Colonic mucosa (tissue), 4 donors: ENCODE measurements at regions of chr13 and their contacts with region 1.

Region 1: DNA sequence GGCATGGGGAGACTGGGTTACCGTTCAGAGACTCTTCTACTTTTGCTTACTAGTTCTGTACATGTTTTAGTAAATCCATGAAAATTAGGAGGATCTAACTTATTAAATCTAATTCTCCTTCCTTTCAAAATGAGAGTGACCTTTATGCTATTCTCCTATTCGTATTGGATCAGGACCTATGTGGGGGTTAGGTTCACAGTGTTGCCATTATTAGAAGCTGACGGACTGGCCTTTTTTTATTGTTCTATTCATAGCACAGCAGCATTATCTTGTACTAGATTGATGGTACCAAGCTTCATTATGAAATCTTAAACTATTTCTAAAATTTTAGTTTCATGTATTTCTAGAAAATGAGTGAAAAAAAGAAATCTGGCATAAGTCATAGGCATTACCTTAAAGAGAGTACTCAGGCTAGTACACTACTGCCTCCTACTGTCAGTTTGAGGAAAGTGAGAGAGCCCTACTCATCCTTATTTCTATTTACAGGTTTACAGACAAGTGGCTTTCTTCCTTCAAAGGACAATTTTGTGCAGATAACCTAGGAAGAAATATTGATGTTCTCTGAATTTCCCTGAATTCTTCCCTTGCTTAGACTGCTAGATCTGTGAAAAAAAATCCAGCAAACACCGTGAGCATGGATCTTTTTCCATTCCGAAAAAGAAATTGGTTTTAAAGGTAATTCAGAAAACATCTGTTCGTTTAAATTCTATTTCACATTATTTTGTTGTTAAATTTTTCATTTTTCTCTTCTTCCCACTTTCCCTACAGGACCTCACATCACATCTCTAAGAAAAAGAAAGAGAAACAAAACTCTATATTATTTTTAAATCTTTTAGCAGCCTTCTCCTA is 485.5 kb downstream of the DIAPH3 start:
- DNase-seq: no peak
- H3K4me3 ChIP-seq: no peak overlapping the region
- H3K27ac ChIP-seq: no peak overlapping the region
- H3K4me1 ChIP-seq: no peaks in the 10 kb centered on the region
- H3K27me3 ChIP-seq: no peaks in the 10 kb centered on the region
- CTCF ChIP-seq: peak; percentile 76

Region 2: GRCh38 chr13:59201841-59202240 is 476.3 kb before region 1 on chr13:
- intact Hi-C with region 1: no loop called
- DNase-seq: no peak
- H3K4me3 ChIP-seq: no peak overlapping the region
- H3K27ac ChIP-seq: no peak overlapping the region
- H3K4me1 ChIP-seq: no peaks in the 10 kb centered on the region
- H3K27me3 ChIP-seq: no peaks in the 10 kb centered on the region
- CTCF ChIP-seq: no peak

Region 3: DNA sequence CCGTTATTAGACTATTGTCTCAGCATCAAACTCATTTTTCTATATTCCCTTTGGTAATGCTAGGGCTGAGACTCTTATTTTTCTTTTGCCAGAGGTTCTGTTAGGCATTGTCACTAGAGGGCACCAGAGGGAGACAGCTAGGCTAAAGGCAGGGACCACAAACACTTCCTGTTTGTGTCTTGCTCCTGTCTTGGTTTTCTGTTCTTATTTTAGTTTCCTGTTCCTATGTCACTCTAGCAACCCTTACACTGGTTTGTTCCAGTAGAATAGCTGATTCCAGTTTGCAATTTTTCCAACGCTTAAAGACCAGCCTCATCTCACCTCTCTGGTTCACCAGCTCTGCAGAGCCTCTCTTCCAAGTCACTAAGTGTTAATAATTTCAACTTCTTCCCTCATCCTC is 286.5 kb before region 1 on chr13:
- intact Hi-C with region 1: loop called (anchors 5 kb)
- DNase-seq: peak; percentile 67
- H3K4me3 ChIP-seq: no peak overlapping the region
- H3K27ac ChIP-seq: no peak overlapping the region
- H3K4me1 ChIP-seq: no peaks in the 10 kb centered on the region
- H3K27me3 ChIP-seq: no peaks in the 10 kb centered on the region
- CTCF ChIP-seq: peak; percentile 72

Region 4: DNA sequence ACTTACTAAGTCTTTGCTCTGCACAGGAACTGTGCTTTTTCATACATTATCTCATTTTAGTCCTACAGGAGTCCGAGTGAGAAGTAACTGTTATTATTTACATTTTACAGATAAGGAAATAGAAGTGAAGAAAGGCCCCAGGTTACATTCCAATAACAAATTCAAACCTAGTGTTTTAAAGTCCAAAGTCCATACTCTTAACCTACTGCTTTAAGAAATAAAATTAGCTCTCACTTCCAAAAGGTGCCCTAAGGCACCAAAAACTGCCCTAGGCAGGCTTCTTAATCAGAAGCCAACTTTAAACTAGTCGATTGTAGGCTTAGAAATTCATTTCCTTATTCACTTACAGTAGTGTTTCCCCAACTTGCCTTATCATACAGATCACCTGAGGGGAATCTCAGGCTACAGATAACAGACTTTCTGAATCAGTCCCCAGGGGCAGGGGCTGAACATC is 70.4 kb before region 1 on chr13:
- intact Hi-C with region 1: no loop called
- DNase-seq: no peak
- H3K4me3 ChIP-seq: no peak overlapping the region
- H3K27ac ChIP-seq: no peak overlapping the region
- H3K4me1 ChIP-seq: no peaks in the 10 kb centered on the region
- H3K27me3 ChIP-seq: no peaks in the 10 kb centered on the region
- CTCF ChIP-seq: no peak

Region 5: GRCh38 chr13:59801107-59801880 is 123.1 kb after region 1 on chr13:
- intact Hi-C with region 1: no loop called
- DNase-seq: no peak
- H3K4me3 ChIP-seq: no peak overlapping the region
- H3K27ac ChIP-seq: no peak overlapping the region
- H3K4me1 ChIP-seq: no peaks in the 10 kb centered on the region
- H3K27me3 ChIP-seq: no peaks in the 10 kb centered on the region
- CTCF ChIP-seq: no peak

Region 6: DNA sequence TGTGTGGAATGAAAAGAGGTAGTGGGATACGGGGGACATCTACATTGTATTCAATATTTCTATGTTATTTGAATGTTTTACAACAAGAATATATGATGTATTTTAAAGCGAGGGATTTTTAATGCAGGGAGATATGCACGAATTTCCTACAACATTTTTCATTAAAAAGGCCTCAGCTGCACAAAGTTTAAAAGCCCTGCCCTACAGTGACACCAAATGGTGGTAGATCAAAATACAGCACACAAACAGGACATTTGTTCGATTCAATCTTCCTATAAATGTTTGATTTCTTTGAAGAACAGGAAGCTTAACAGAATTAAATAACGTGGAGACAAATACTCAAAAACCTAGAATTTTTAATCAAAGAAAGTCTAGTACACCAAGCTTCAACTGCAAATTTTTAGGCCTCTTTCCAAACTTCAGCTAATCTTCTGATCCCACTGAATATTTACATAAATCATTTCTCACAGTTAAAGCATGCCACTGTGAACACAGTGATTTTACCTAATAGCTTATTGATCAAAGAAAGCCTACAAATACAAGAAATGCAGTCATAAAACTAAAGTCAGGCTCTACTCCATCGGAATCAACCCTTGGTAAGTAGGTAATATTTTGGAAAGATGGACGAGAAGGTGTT is 228.3 kb after region 1 on chr13:
- intact Hi-C with region 1: loop called (anchors 5 kb)
- DNase-seq: no peak
- H3K4me3 ChIP-seq: no peak overlapping the region
- H3K27ac ChIP-seq: no peak overlapping the region
- H3K4me1 ChIP-seq: no peaks in the 10 kb centered on the region
- H3K27me3 ChIP-seq: no peaks in the 10 kb centered on the region
- CTCF ChIP-seq: peak; percentile 40

Region 7: DNA sequence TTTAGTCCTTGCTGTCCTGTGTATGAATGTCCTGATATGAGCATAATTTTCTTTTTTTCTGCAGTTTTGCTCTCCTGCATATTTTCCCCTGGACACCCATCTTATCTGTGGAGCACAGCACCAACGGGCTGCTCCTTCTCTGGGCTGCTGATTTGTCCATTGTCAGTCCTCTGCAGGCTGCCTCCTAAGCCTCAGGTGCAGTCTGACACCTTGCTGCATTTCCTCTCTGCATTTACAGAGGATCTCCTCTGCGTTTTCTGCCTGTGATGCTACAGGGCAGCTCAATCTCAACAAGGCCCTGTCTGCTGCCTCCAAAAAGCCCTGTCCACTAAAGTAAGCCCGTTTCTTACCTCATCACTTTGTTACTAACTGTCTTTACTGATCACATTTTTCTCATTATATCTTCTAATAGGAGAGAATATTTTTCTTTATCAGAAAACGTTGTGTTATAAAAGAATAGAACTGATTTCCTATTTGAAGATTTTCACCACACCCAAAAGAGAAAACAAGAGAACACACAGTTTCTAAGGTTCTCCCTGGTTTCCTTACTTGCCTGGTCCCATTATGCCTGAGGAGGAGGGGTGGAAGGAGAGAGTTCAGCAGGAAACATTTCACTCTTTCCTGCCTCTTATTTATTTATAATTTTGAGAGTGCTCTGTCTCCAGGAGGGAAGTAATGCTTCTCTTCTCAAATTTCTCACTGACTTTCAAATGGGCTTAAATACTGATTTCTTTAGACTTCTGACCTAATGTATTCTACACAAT is 653.2 kb after region 1 on chr13:
- intact Hi-C with region 1: loop called (anchors 5 kb)
- DNase-seq: no peak
- H3K4me3 ChIP-seq: no peak overlapping the region
- H3K27ac ChIP-seq: no peak overlapping the region
- H3K4me1 ChIP-seq: no peaks in the 10 kb centered on the region
- H3K27me3 ChIP-seq: no peaks in the 10 kb centered on the region
- CTCF ChIP-seq: no peak